ENCODE measurements at regions of chr2 and their contacts with region 1.

Region 1: GRCh38 chr2:38734299-38735058 is 16.7 kb downstream of the SRSF7 start:
- DNase-seq: no peak
- ATAC-seq: no peak
- H3K4me3 ChIP-seq: no peak overlapping the region
- H3K27ac ChIP-seq: no peak overlapping the region
- H3K4me1 ChIP-seq: peaks cover 6 to 14% (median 14%) of the 10 kb centered on the region in 3 donors
- H3K27me3 ChIP-seq: no peaks in the 10 kb centered on the region
- CTCF ChIP-seq: no peak

Region 2: GRCh38 chr2:38315707-38316333 is 418.7 kb before region 1 on chr2:
- intact Hi-C with region 1: loop called in 1 of 3 experiments (anchors 10 kb)
- DNase-seq: no peak
- ATAC-seq: peak in 3 of 4 donors; percentile 80 to 83 (median 81)
- H3K4me3 ChIP-seq: no peak overlapping the region
- H3K27ac ChIP-seq: no peak overlapping the region
- H3K4me1 ChIP-seq: no peaks in the 10 kb centered on the region
- H3K27me3 ChIP-seq: no peaks in the 10 kb centered on the region
- CTCF ChIP-seq: peak; percentile 24 to 55 (median 36)

Region 3: GRCh38 chr2:38581193-38582147 is 153.0 kb before region 1 on chr2:
- intact Hi-C with region 1: loop called (anchors 5 to 10 kb)
- DNase-seq: peak in 2 of 6 donors; percentile 26 to 31
- ATAC-seq: peak; percentile 71 to 98 (median 94)
- H3K4me3 ChIP-seq: no peak overlapping the region
- H3K27ac ChIP-seq: no peak overlapping the region
- H3K4me1 ChIP-seq: no peaks in the 10 kb centered on the region
- H3K27me3 ChIP-seq: no peaks in the 10 kb centered on the region
- CTCF ChIP-seq: peak; percentile 13 to 55 (median 50)

Region 4: DNA sequence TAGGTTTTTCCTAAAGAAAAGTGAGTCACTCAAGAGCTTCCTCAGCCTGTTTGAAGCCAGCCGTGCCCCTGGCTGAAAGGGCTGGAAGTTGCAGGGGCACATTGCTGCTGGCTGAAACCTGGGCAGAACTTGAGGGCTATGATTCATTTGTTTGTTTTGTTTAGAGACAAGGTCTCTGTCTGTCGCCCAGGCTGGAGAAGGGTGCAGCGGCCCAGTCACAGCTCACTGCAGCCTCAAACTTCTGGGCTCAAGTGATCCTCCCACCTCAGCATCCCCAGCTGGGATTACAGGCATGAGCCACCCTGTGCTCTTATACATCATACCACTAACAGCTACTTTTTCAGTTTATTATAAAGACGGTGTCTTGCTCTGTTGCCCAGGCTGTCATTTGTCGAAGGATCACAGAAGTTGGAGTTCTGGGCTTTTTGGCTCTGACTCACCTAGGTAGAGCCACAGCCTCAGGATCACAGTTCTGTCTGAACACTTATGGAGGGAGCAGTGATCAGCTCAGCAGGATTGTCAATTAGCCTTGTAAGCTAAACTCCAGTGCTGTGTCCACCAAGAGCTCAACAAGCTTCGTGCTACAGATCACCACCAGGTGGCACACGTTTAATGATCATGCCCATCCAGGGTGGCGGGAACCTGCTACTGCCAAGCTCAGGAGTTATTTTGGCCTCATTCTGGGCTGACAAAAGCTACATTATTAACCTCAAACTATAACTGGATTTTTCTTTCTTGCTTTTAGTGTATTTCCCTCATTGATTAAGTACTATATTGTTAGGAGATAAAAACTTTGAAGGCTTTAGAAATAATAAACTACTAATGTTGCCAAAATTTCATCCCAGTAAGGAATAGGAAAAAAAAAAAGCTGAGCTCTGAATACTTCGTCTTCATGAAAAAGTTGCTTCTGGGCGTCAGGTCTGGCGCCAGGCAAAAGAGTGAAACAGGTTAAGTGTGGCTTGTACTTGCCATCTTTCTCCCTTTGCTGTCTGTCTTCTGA is 213.1 kb after region 1 on chr2:
- intact Hi-C with region 1: no loop called
- DNase-seq: peak; percentile 52 to 73 (median 60)
- ATAC-seq: peak; percentile 78 to 98 (median 96)
- H3K4me3 ChIP-seq: no peak overlapping the region
- H3K27ac ChIP-seq: no peak overlapping the region
- H3K4me1 ChIP-seq: no peaks in the 10 kb centered on the region
- H3K27me3 ChIP-seq: no peaks in the 10 kb centered on the region
- CTCF ChIP-seq: peak; percentile 48 to 69 (median 58)

Measured in pancreas (tissue), 10 donors.